Sigmoid colon (tissue), 7 donors: ENCODE measurements at regions of chr1 and their contacts with region 1.

Region 1: GRCh38 chr1:245156081-245156735 is 1.4 kb downstream of the KIF26B start:
- DNase-seq: peak; percentile 88
- H3K4me3 ChIP-seq: peak overlapping the region; percentile 30 to 58 (median 52)
- H3K27ac ChIP-seq: peak overlapping the region in 1 of 4 donors; percentile 34
- H3K4me1 ChIP-seq: peaks cover 0 to 42% (median 41%) of the 10 kb centered on the region in 4 donors
- H3K27me3 ChIP-seq: peaks cover 10 to 64% (median 36%) of the 10 kb centered on the region in 3 donors
- CTCF ChIP-seq: peak in 3 of 4 experiments; percentile 46 to 83 (median 53)
- EP300 ChIP-seq: no peak
- POLR2A ChIP-seq: no peak

Region 2: GRCh38 chr1:246002725-246003441 is 846.7 kb after region 1 on chr1:
- intact Hi-C with region 1: loop called (anchors 1 kb)
- DNase-seq: peak; percentile 88
- H3K4me3 ChIP-seq: no peak overlapping the region
- H3K27ac ChIP-seq: no peak overlapping the region
- H3K4me1 ChIP-seq: peaks cover 0 to 28% (median 13%) of the 10 kb centered on the region in 4 donors
- H3K27me3 ChIP-seq: no peaks in the 10 kb centered on the region
- CTCF ChIP-seq: peak; percentile 37 to 89 (median 82)
- EP300 ChIP-seq: no peak
- POLR2A ChIP-seq: no peak

Region 3: GRCh38 chr1:246280551-246280950 is 1124.3 kb after region 1 on chr1:
- intact Hi-C with region 1: loop called (anchors 5 kb)
- DNase-seq: no peak
- H3K4me3 ChIP-seq: no peak overlapping the region
- H3K27ac ChIP-seq: no peak overlapping the region
- H3K4me1 ChIP-seq: no peaks in the 10 kb centered on the region
- H3K27me3 ChIP-seq: no peaks in the 10 kb centered on the region
- CTCF ChIP-seq: no peak
- EP300 ChIP-seq: no peak
- POLR2A ChIP-seq: no peak

Region 4: GRCh38 chr1:246699095-246699735 is 1543.0 kb after region 1 on chr1:
- intact Hi-C with region 1: loop called (anchors 10 kb)
- DNase-seq: peak; percentile 95
- H3K4me3 ChIP-seq: peak overlapping the region; percentile 17 to 37 (median 27)
- H3K27ac ChIP-seq: peak overlapping the region; percentile 6 to 74 (median 56)
- H3K4me1 ChIP-seq: peaks cover 0 to 10% (median 2%) of the 10 kb centered on the region in 4 donors
- H3K27me3 ChIP-seq: no peaks in the 10 kb centered on the region
- CTCF ChIP-seq: peak; percentile 62 to 79 (median 69)
- EP300 ChIP-seq: no peak
- POLR2A ChIP-seq: no peak